Heart right ventricle (tissue), 16 donors: ENCODE measurements at regions of chr15 and their contacts with region 1.

Region 1: GRCh38 chr15:80072285-80072994 is 13.0 kb downstream of the ZFAND6 start:
- DNase-seq: peak in 1 of 2 donors; percentile 51
- ATAC-seq: peak; percentile 88 to 99 (median 98)
- H3K4me3 ChIP-seq: peak overlapping the region in 9 of 10 donors; percentile 25 to 60 (median 52)
- H3K27ac ChIP-seq: peak overlapping the region in 4 of 10 donors; percentile 29 to 57 (median 56)
- H3K4me1 ChIP-seq: peaks cover 0 to 79% (median 51%) of the 10 kb centered on the region in 9 donors
- H3K27me3 ChIP-seq: no peaks in the 10 kb centered on the region
- CTCF ChIP-seq: no peak

Region 2: GRCh38 chr15:79923515-79924395 is 148.7 kb before region 1 on chr15:
- intact Hi-C with region 1: loop called in 1 of 10 experiments (anchors 5 kb)
- DNase-seq: peak; percentile 92 to 94
- ATAC-seq: peak; percentile 98 to 100 (median 99)
- H3K4me3 ChIP-seq: peak overlapping the region; percentile 66 to 99 (median 87)
- H3K27ac ChIP-seq: peak overlapping the region; percentile 50 to 98 (median 94)
- H3K4me1 ChIP-seq: peaks cover 0 to 16% (median 9%) of the 10 kb centered on the region in 9 donors
- H3K27me3 ChIP-seq: no peaks in the 10 kb centered on the region
- CTCF ChIP-seq: no peak

Region 3: GRCh38 chr15:80121546-80121945 is 49.1 kb after region 1 on chr15:
- intact Hi-C with region 1: no loop called
- DNase-seq: no peak
- ATAC-seq: no peak
- H3K4me3 ChIP-seq: no peak overlapping the region
- H3K27ac ChIP-seq: no peak overlapping the region
- H3K4me1 ChIP-seq: peaks cover 0 to 9% (median 0%) of the 10 kb centered on the region in 9 donors
- H3K27me3 ChIP-seq: no peaks in the 10 kb centered on the region
- CTCF ChIP-seq: no peak

Region 4: DNA sequence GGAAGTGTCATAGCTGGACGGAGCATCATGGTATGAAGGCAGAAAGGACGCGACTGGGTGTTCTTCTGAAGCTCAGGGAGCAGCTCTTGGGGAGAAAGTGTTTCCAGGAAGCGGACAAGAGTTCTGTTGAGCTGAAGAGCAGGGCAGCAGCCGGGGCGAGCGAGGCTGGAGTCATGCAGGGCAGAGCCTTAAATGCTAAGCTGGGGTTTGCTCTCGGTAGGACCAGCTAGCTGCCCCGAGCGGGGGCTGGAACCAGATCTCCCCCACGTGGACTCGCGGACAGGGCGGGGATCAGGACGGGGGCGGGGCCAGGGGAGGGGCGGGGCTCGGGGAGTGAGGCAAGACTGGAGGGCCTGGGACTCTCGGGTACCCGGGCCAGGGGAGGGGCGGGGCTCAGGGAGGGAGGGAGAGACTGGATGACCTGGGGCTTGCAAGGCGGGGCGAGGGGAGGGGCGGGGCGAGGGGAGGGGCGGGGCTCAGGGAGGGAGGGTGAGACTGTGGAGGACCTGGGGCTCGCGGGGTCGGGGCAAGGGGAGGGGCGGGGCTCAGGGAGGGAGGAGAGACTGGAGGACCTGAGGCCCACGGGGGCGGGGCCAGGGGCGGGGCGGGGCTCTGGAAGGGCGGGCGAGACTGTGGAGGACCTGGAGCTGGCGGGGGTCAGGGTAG is 79.9 kb after region 1 on chr15:
- intact Hi-C with region 1: loop called in 2 of 10 experiments (anchors 5 kb)
- DNase-seq: peak; percentile 96
- ATAC-seq: peak; percentile 86 to 94 (median 92)
- H3K4me3 ChIP-seq: peak overlapping the region; percentile 55 to 84 (median 72)
- H3K27ac ChIP-seq: peak overlapping the region in 9 of 10 donors; percentile 57 to 82 (median 75)
- H3K4me1 ChIP-seq: peaks cover 6 to 40% (median 20%) of the 10 kb centered on the region in 9 donors
- H3K27me3 ChIP-seq: no peaks in the 10 kb centered on the region
- CTCF ChIP-seq: no peak